IMR-90 (cell line): ENCODE measurements at regions of chr4 and their contacts with region 1.

Region 1: GRCh38 chr4:177464026-177464425 is 21.8 kb upstream of the AGA start:
- DNase-seq: peak; percentile 44
- ATAC-seq: peak; percentile 51
- H3K4me3 ChIP-seq: no peak overlapping the region
- H3K27ac ChIP-seq: no peak overlapping the region
- H3K4me1 ChIP-seq: no peaks in the 10 kb centered on the region; the same call in 1 of the 2 replicates
- H3K27me3 ChIP-seq: no peaks in the 10 kb centered on the region
- CTCF ChIP-seq: no peak
- POLR2A ChIP-seq: no peak
- RAD21 ChIP-seq: no peak

Region 2: DNA sequence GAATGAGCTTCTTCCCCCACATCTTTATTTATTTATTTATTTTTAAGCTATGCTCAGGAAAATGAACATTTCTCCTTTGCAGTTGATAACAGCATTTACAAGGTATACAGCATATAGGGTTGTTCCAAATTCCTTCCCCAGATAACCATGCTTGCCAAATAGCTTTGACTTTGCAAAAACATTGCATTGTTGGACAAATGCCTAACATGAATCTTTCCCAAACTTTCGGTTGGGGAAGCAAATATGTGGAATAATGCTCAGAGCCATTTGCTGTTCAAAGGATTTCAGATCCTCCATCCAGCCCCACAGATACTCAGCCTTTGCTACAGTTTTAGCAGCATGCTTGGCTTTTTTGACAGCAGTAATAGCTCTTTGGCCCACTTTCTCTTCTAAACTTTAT is 105.4 kb after region 1 on chr4:
- CTCF ChIA-PET with region 1: no interaction called
- POLR2A ChIA-PET with region 1: interaction called, 20 read pairs
- dilution Hi-C with region 1: no loop called
- in situ Hi-C with region 1: no loop called
- intact Hi-C with region 1: no loop called
- DNase-seq: peak; percentile 70
- ATAC-seq: peak; percentile 69
- H3K4me3 ChIP-seq: no peak overlapping the region
- H3K27ac ChIP-seq: peak overlapping the region; percentile 77; the same call in 1 of the 2 replicates
- H3K4me1 ChIP-seq: peaks cover 9% of the 10 kb centered on the region
- H3K27me3 ChIP-seq: no peaks in the 10 kb centered on the region
- CTCF ChIP-seq: no peak
- POLR2A ChIP-seq: no peak
- RAD21 ChIP-seq: no peak